Natural killer cell (primary cell): ENCODE measurements at regions of chr14 and their contacts with region 1.

Region 1: DNA sequence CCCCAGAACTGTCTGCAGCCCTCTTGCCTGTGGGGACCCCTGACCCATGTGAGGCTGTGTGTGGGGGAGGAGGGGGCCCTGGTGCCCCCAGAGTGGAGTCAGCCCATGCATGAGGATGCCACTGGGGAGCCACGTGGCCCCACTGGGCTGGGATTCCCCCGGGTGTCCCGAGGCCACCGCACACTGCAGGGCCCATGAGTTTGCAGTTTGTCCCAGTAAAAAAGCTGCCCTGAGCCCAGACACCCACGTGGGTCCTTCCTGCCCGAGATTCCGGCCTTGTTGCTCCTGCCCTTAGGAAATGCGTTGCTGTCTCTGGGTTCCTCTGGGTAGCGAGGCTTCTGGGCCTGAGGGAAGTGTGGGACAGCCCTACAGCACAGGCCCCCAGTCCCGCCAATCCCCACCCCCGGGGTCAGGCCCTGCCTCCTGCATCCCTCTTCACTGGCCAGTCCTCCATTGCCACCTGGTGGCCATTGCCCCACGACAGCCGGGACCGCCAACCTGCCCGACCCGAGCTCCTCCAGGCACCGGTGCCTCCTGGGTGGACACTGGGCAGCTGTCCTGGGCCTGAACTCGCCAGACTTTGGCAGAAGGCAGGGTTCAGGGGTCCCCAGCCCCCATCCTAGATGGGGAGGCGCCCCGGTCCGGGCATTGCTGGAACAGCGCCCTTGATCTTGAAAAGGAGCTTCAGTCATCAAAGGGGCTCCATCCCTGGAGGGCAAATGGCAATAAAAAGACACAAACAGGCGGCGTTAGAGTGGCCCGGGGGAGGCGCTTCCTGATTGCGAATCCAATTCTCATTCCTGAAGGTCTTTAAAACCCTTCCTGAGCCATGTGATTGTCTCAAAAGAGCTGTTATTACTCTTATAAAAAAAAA is 15.6 kb upstream of the C14orf180 start:
- DNase-seq: peak; percentile 60 to 81
- ATAC-seq: peak in 2 of 3 donors; percentile 77 to 89
- H3K4me3 ChIP-seq: no peak overlapping the region
- H3K4me3 Mint-ChIP-seq: no peak overlapping the region
- H3K27ac ChIP-seq: no peak overlapping the region
- H3K27ac Mint-ChIP-seq: no peak overlapping the region
- H3K4me1 ChIP-seq: peaks cover 6% of the 10 kb centered on the region
- H3K4me1 Mint-ChIP-seq: peaks cover 0 to 6% of the 10 kb centered on the region in 2 donors
- H3K27me3 ChIP-seq: peaks cover 2% of the 10 kb centered on the region
- H3K27me3 Mint-ChIP-seq: peaks cover 0 to 6% of the 10 kb centered on the region in 2 donors
- CTCF ChIP-seq: peak; percentile 75

Region 2: DNA sequence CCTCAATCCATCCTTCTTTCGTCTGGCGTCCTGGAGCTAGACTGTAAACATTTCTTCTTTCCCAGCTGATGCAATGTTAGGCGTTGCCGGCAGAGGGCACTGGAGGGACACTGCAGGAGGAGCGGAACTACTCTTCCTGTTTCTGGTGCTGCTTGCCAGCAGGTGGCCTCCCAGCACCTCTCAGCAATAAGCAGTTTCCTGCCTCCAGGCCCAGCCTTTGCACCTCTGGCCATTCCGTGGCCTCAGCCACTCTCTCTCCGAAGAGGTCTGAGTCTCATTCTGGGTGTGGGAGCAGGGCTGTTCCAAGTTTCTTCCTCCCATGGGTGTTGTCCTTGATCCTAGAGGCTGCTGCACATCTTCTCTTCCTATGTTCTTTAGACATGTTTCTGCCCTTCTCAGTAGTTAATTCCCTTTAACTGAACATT is 485.9 kb before region 1 on chr14:
- intact Hi-C with region 1: loop called (anchors 1 kb)
- DNase-seq: peak; percentile 76 to 92
- ATAC-seq: peak; percentile 96 to 100 (median 100)
- H3K4me3 ChIP-seq: no peak overlapping the region
- H3K4me3 Mint-ChIP-seq: no peak overlapping the region
- H3K27ac ChIP-seq: peak overlapping the region; percentile 11
- H3K27ac Mint-ChIP-seq: no peak overlapping the region
- H3K4me1 ChIP-seq: peaks cover 6% of the 10 kb centered on the region
- H3K4me1 Mint-ChIP-seq: peaks cover 9 to 16% of the 10 kb centered on the region in 2 donors
- H3K27me3 ChIP-seq: no peaks in the 10 kb centered on the region
- H3K27me3 Mint-ChIP-seq: peaks cover 6 to 10% of the 10 kb centered on the region in 2 donors
- CTCF ChIP-seq: peak; percentile 100

Region 3: GRCh38 chr14:104094709-104095438 is 469.1 kb before region 1 on chr14:
- intact Hi-C with region 1: loop called (anchors 5 kb)
- DNase-seq: peak; percentile 73 to 81
- ATAC-seq: peak; percentile 63 to 80 (median 76)
- H3K4me3 ChIP-seq: no peak overlapping the region
- H3K4me3 Mint-ChIP-seq: no peak overlapping the region
- H3K27ac ChIP-seq: no peak overlapping the region
- H3K27ac Mint-ChIP-seq: no peak overlapping the region
- H3K4me1 ChIP-seq: peaks cover 11% of the 10 kb centered on the region
- H3K4me1 Mint-ChIP-seq: peaks cover 5 to 7% of the 10 kb centered on the region in 2 donors
- H3K27me3 ChIP-seq: no peaks in the 10 kb centered on the region
- H3K27me3 Mint-ChIP-seq: peaks cover 0 to 3% of the 10 kb centered on the region in 2 donors
- CTCF ChIP-seq: peak; percentile 91

Region 4: DNA sequence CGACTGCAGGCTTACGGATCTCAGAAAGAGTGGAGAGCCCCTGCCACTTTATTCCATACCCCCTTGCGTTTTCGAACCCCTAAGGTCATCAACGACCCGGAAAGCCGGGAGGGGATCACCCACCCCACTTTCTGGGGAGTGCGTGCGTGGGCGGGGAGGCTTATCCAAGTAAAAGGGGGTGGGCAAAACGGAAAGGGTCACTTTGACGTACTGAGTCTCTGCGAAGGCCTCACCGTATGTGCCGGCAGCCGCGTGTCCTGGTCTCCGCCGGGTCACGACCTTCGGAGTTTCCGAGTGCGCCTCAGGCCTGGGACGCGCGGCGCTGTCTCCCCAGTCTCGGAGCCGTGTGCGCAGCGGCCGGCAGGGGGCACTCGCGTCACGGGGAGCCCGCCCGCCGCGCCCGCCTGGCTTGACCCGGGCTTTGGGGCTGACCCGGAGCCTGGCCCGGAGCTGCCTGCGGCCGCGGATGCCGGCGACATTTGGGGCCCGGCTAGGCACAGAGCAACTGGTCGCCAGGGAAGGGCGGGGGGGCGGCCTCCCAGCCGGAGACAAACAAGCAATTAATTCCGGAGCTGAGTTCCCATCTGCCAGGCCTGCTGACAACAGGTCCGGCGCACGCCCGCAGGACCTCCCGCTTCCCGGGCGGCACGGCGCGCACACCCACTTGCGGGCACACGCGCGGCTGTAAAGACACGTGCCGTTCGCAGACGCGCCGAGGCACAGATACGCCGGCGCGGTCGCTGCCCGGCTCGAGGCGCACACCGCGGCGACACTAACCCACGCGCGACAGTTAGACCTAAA is 426.5 kb before region 1 on chr14:
- intact Hi-C with region 1: loop called (anchors 1 kb)
- DNase-seq: peak; percentile 60 to 71
- ATAC-seq: peak; percentile 53 to 91 (median 80)
- H3K4me3 ChIP-seq: no peak overlapping the region
- H3K4me3 Mint-ChIP-seq: peak overlapping the region; percentile 62
- H3K27ac ChIP-seq: no peak overlapping the region
- H3K27ac Mint-ChIP-seq: no peak overlapping the region
- H3K4me1 ChIP-seq: peaks cover 14% of the 10 kb centered on the region
- H3K4me1 Mint-ChIP-seq: no peaks in the 10 kb centered on the region
- H3K27me3 ChIP-seq: peaks cover 20% of the 10 kb centered on the region
- H3K27me3 Mint-ChIP-seq: peaks cover 0 to 27% of the 10 kb centered on the region in 2 donors
- CTCF ChIP-seq: peak; percentile 81

Region 5: DNA sequence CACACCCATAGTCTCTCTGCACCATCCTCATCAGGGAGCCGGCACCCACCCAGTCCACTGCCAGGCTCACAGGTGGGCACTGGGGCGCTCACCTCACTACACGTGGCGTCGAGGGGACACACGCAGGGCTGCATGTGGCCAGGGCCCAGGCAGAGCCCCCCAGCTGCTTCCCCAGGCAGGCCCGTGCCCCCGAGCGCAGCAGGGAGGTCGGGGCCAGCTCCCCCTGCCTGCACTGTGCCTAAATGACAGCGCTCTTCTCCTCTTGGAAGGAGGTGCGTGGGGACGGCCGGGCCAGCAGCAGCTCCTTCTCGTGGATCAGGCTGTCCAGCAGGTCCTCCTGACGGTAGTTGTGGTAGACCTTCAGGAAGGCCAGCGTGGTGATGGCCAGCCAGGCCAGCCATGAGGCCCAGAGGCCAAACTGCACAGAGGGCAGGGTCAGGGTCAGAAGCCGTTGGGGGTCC is 29.3 kb after region 1 on chr14:
- intact Hi-C with region 1: no loop called
- DNase-seq: no peak
- ATAC-seq: no peak
- H3K4me3 ChIP-seq: no peak overlapping the region
- H3K4me3 Mint-ChIP-seq: no peak overlapping the region
- H3K27ac ChIP-seq: no peak overlapping the region
- H3K27ac Mint-ChIP-seq: no peak overlapping the region
- H3K4me1 ChIP-seq: no peaks in the 10 kb centered on the region
- H3K4me1 Mint-ChIP-seq: no peaks in the 10 kb centered on the region
- H3K27me3 ChIP-seq: no peaks in the 10 kb centered on the region
- H3K27me3 Mint-ChIP-seq: peaks cover 0 to 2% of the 10 kb centered on the region in 2 donors
- CTCF ChIP-seq: no peak

Region 6: DNA sequence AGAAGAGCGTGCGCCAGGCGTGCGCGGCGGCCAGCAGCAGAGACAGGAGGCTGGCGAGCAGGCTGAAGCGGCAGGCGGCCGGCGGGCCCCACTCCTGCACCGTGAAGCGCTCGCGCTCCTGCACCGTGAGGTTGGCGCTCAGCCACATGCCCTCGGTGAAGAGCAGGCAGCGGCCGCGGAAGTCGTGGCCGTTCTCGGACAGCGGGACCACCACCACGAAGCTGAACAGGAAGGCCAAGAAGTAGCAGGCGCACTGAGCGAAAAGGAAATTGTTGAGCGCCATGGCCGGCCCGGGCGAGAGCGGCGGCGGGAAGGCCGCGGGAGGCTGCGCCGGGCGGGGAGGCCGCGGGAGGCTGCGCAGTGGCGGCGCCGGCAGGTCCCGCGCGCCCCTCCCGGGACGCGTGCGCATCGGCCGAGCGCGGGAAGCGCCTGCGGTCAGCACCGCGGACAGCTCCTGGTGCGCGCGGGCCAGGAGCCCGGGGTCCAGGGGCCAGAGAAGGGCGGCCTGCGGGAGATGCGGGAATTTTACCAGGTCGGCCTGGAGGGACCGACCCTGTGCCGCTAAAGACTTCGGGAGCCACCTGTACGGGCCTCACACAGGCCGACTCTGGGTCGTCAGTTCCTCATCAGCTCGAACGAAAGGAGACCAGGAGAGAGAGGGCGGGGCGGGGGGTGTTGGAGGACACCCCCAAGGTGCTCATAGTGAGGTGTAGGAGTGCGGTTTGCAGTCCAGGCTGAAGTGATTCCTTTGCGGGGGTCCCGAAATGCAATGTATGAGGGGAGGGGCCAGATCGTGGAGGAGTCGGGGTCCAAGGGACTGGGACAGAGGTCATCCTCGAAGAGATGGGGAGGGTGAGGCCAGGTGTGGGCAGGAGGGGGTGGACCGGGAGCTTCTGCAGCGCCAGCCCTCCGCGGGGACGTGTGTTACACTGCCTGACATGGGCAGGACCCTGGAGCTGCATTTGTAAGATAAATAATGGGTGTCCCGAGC is 40.8 kb after region 1 on chr14 and contains the start of gene TMEM179:
- intact Hi-C with region 1: no loop called
- DNase-seq: no peak
- ATAC-seq: no peak
- H3K4me3 ChIP-seq: no peak within 1 kb of the TSS
- H3K4me3 Mint-ChIP-seq: no peak within 1 kb of the TSS
- H3K27ac ChIP-seq: no peak within 1 kb of the TSS
- H3K27ac Mint-ChIP-seq: no peak within 1 kb of the TSS
- H3K4me1 ChIP-seq: no peaks in the 10 kb centered on the region
- H3K4me1 Mint-ChIP-seq: peaks cover 0 to 17% of the 10 kb centered on the region in 2 donors
- H3K27me3 ChIP-seq: peaks cover 7% of the 10 kb centered on the region
- H3K27me3 Mint-ChIP-seq: peaks cover 47 to 71% of the 10 kb centered on the region in 2 donors
- CTCF ChIP-seq: no peak
- total RNA-seq, gene TMEM179: not detected

Region 7: DNA sequence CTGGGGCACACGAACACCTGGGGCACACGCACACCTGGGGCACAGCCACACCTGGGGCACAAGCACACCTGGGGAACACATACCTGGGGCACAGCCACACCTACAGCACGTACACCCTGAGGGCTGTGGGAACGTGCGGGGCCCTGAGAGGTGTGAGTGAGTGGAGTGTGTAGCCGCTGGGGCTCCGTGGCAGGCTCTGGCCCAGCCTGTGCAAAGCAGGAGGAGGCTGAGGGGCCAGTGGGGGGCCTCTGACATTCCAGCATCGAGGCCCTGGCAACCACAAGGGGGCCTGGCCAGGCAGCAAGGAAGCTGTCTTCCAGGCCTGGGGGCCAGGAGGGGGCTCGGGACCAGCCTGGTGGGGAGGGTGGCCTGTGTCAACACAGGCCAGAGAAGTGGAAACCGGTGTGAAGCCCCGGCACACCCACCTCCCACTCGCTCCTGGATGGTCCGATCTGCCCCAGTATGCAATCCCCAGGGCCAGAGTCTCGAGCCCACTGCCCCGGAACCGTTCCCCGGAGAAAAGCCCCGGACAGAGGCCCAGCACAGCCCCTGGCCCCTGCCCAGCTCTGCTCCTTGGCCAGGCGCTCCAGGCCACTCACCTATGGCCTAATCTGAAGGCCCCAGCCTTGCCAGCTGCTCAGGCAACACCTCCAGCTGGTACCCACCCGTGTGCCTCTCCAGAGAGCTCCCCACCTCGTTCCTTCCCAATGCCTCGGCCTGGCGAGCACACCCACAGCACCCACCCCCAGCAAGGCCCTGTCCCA is 213.7 kb after region 1 on chr14:
- intact Hi-C with region 1: no loop called
- DNase-seq: no peak
- ATAC-seq: no peak
- H3K4me3 ChIP-seq: no peak overlapping the region
- H3K4me3 Mint-ChIP-seq: no peak overlapping the region
- H3K27ac ChIP-seq: no peak overlapping the region
- H3K27ac Mint-ChIP-seq: no peak overlapping the region
- H3K4me1 ChIP-seq: no peaks in the 10 kb centered on the region
- H3K4me1 Mint-ChIP-seq: peaks cover 0 to 10% of the 10 kb centered on the region in 2 donors
- H3K27me3 ChIP-seq: no peaks in the 10 kb centered on the region
- H3K27me3 Mint-ChIP-seq: no peaks in the 10 kb centered on the region
- CTCF ChIP-seq: no peak